ENCODE measurements at regions of chr6 and their contacts with region 1.

Region 1: DNA sequence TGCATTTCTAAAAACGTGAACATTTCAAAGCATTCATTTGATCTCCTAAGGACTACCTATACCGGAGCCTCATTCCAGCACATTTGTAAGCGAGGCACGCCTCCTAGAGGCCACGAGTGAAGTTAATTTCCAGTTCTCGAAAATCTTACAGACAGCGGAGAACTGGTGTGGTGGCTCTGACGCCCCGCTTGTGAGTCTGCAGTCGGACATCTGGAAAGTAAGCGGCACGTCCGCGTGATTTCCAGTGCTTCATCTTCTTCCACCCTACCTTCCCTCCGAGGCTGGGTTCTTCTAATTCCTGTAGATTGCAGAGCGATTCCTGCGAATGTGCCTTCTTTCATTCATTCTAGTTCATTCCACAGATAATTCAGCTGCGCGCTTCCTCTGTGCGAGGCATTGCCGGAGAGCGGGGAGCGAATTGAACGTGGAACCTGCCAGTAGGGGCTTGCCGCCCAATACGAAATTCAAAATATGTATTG is 810 bp upstream of the PRIM2 start:
- DNase-seq: peak; percentile 92
- ATAC-seq: peak; percentile 90
- H3K4me3 ChIP-seq: peak overlapping the region; percentile 77 to 91
- H3K27ac ChIP-seq: peak overlapping the region; percentile 94
- H3K4me1 ChIP-seq: peaks cover 47% of the 10 kb centered on the region
- H3K27me3 ChIP-seq: no peaks in the 10 kb centered on the region
- CTCF ChIP-seq: peak; percentile 94

Region 2: DNA sequence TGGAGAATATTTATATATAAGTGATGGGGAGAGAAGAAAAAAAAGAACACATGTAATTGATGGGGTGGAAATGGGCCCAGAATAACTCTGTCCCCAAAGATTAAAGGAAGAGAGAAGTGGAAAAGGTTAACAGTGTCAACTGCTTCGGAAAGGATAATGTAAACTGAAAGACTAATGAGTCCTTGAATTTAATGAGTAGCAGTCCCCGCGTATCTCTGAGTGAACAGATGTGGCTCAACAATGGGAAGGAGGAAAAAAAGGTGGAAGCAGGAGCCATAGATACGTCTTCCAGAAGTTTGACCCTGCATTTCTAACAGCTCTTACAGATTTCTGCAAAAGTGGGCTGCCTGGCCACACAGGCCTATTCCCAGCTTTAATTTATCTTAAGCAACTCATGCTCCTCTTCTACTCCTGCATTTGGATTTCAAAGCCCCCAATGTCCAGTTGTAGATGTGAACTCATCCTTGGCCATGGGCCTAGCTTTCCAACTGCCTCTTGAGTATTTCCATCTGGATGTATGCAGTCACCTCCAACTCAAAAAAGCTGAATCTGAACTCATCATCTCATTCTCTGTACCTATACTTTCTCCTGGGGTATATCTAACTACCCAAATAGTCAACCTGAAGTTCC is 735.2 kb before region 1 on chr6:
- CTCF ChIA-PET with region 1: no interaction called
- POLR2A ChIA-PET with region 1: no interaction called
- in situ Hi-C with region 1: no loop called
- intact Hi-C with region 1: no loop called
- DNase-seq: no peak
- ATAC-seq: no peak
- H3K4me3 ChIP-seq: no peak overlapping the region
- H3K27ac ChIP-seq: no peak overlapping the region
- H3K4me1 ChIP-seq: no peaks in the 10 kb centered on the region
- H3K27me3 ChIP-seq: no peaks in the 10 kb centered on the region
- CTCF ChIP-seq: no peak

Region 3: DNA sequence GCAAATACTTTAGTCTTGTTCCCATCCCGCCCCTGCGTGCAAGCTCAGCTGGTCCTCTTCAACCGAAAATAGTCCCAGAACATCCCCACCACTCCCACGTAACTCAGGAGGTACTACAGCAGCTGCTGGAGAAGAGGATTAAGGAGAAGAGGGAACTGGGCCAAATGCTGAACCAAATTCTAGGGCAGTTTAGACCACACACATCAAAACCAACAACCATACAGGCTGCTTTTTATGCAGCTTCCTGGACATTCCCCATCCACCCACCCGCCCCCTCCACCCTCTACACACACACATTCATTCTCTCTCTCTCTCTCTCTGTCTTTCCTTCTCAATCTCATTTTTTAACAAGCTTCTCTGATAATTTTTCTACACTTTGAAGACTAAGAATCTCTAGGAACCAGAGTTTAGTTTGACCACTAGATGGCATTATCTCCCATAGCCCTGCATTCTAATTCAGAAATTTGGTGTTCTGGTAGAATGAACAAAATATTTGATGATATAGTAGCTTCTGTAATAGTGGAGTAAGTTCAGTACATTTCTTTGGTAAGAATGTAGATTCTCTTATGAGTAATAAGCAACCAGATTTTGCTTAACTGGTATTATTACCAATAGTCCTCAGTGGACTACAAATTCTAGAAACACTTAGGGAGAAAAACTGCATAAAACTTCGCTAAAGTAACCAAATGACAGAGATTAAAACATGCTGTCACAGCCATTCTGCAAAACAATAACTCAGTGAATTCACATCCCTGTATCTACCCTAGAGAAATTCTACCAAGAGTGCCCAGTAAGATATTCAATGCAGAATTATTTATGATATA is 413.8 kb before region 1 on chr6:
- CTCF ChIA-PET with region 1: interaction called, 8 read pairs
- POLR2A ChIA-PET with region 1: no interaction called
- in situ Hi-C with region 1: no loop called
- intact Hi-C with region 1: loop called (anchors 2 kb)
- DNase-seq: no peak
- ATAC-seq: peak; percentile 46; the same call in 1 of the 2 replicates
- H3K4me3 ChIP-seq: no peak overlapping the region
- H3K27ac ChIP-seq: 0 out of 2 replicates have a peak overlapping the region, but pooled peaks have one; percentile 25
- H3K4me1 ChIP-seq: peaks cover 15% of the 10 kb centered on the region; the same call in 1 of the 2 replicates
- H3K27me3 ChIP-seq: no peaks in the 10 kb centered on the region
- CTCF ChIP-seq: peak; percentile 89

Region 4: DNA sequence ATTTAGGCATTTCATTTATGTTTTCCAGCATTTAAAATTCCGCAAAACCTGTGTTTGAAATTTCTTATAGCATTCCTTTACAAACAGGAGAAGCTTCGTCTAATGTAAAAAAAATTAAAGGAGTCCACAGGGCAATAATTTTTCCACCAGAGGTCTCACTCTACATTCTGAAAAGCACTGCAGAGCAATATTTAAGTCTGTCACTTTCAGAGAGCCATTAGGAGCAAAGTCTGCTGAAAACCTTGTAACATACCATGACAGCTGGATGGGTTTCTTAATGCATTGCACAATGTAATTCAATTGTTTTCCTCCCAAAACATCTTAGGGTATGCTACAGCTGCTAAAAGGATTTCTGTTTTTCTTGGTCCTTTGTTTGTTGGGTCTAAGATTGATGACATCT is 126.5 kb before region 1 on chr6:
- CTCF ChIA-PET with region 1: interaction called, 8 read pairs
- POLR2A ChIA-PET with region 1: no interaction called
- in situ Hi-C with region 1: no loop called
- intact Hi-C with region 1: loop called (anchors 1 kb)
- DNase-seq: no peak
- ATAC-seq: peak; percentile 81
- H3K4me3 ChIP-seq: no peak overlapping the region
- H3K27ac ChIP-seq: no peak overlapping the region
- H3K4me1 ChIP-seq: no peaks in the 10 kb centered on the region
- H3K27me3 ChIP-seq: no peaks in the 10 kb centered on the region
- CTCF ChIP-seq: peak; percentile 70; the same call in 1 of the 2 replicates

Region 5: GRCh38 chr6:57267586-57268293 is 48.9 kb before region 1 on chr6:
- CTCF ChIA-PET with region 1: no interaction called
- POLR2A ChIA-PET with region 1: no interaction called
- in situ Hi-C with region 1: no loop called
- intact Hi-C with region 1: loop called (anchors 1 kb)
- DNase-seq: peak; percentile 67
- ATAC-seq: peak; percentile 91
- H3K4me3 ChIP-seq: no peak overlapping the region
- H3K27ac ChIP-seq: peak overlapping the region; percentile 52; the same call in 1 of the 2 replicates
- H3K4me1 ChIP-seq: no peaks in the 10 kb centered on the region; the same call in 1 of the 2 replicates
- H3K27me3 ChIP-seq: no peaks in the 10 kb centered on the region
- CTCF ChIP-seq: peak; percentile 68; the same call in 1 of the 2 replicates